ENCODE measurements at regions of chr17 and their contacts with region 1.

Region 1: GRCh38 chr17:17919169-17920107 is 52.8 kb downstream of the TOM1L2 start:
- DNase-seq: peak; percentile 69
- ATAC-seq: peak; percentile 60

Region 2: DNA sequence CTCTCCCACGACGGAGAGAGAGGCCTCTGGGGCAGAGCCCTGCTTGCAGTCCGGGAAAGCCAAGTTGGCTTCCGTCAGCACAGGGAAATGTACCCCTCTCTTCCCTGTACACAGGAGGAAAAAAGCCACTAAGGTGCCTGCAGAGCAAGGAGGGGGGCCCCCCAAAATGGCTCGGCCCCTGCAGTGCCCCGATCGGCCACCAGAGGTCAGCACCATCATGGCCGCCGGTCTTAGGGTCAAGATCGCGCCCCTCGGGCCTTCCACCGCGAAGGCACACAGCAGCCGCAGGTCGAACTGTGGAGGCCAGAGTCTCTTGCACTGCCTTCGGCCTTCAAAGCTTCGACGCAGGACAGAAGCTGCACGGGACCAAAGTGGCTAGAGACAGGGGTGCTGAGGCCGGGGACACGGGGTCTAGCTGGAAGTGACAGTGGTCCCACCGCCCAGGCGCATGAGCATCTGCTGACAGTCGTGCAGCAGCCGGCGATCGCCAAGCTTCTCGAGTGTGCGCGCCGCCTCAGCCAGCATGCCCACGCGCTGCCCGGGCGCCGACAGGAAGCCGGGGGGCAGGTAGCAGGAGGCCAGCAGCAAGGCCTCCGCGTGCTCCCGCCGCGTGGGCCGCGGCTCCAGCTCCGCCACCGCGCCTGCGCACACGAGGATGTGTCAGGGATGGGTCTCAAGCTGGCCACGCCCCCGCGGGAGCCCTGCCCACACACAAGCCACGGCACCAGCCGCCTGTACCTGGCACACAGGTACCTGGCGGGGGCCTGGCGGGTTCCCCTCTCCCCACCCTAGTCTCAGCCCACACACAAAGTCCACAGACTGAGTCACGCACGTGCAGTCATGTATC is 107.0 kb before region 1 on chr17:
- intact Hi-C with region 1: no loop called
- DNase-seq: peak; percentile 88
- ATAC-seq: peak; percentile 37

Region 3: DNA sequence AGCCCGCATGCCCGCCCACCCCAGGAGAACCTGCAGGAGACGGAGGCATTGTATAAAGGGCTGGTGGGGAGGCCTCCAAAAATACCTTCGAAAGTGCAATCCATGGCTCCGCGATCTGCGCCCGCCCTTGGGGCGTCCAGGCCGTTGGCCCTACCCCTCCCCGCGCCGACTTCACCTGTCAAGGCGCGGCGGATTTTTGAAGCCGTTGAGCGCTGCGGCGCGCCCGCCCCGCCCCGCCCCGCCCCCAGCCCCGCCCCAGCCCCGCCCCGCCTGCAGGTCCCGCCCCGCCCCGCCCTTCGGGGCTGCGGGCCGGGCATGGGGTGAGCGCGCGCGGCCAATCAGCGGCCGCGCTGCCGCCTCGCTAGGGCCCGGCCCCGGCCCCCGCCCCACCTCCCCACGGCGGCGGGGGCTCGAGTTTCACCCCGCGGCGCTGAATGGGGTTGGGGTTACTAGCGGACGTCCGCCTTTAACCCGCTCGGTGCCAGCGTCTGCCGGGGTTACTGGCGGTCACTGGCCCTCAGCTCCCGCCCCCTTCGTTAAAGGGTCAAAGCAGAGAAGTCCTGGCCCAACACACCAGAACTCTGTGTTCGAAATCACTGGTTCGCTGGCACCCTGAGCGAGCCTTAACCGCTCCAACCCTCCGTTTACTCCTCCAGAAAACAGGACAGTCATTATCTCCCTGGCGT is 95.9 kb before region 1 on chr17:
- intact Hi-C with region 1: no loop called
- DNase-seq: peak; percentile 92
- ATAC-seq: peak; percentile 87

Region 4: GRCh38 chr17:18017958-18018357 is 98.5 kb after region 1 on chr17:
- intact Hi-C with region 1: loop called (anchors 10 kb)
- DNase-seq: no peak
- ATAC-seq: peak; percentile 39

Measured in left ventricle myocardium superior (tissue), 1 donor.